ENCODE measurements at regions of chr4 and their contacts with region 1.

Region 1: DNA sequence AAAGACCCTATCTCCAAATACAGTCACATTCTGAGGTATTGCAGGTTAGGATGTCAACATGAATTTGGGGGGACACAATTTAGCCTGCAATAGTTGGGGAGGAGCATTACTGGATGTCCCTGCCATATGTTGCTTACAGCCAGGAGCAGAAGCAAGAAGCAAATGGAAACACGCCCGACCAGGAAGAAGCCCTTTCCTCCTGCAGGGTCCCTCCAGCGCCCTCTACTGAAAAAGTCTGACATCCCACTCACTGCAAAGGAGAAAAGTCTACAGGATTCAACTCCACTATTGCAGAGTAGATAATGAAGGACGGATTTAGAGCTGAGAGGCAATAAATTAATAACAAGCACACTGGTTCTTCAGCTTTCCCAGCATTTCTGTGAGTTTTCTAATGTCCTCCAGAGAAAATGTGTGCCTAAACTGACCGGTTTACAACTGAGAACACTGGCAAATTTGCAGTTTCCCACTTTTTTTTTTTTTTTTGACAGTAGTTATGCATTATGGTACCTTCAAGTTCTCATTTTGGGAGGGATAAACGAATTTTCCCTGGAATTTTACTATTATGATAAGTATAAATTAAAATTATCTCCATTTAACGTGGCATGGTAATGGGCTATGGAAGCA is 31.7 kb downstream of the COQ2 start:
- DNase-seq: peak; percentile 79 to 92
- H3K4me3 ChIP-seq: no peak overlapping the region
- H3K27ac ChIP-seq: no peak overlapping the region
- H3K4me1 ChIP-seq: peaks cover 10 to 26% (median 16%) of the 10 kb centered on the region in 4 donors
- H3K27me3 ChIP-seq: no peaks in the 10 kb centered on the region
- CTCF ChIP-seq: peak in 5 of 7 experiments; percentile 36 to 61 (median 51)
- EP300 ChIP-seq: no peak
- POLR2A ChIP-seq: no peak

Region 2: DNA sequence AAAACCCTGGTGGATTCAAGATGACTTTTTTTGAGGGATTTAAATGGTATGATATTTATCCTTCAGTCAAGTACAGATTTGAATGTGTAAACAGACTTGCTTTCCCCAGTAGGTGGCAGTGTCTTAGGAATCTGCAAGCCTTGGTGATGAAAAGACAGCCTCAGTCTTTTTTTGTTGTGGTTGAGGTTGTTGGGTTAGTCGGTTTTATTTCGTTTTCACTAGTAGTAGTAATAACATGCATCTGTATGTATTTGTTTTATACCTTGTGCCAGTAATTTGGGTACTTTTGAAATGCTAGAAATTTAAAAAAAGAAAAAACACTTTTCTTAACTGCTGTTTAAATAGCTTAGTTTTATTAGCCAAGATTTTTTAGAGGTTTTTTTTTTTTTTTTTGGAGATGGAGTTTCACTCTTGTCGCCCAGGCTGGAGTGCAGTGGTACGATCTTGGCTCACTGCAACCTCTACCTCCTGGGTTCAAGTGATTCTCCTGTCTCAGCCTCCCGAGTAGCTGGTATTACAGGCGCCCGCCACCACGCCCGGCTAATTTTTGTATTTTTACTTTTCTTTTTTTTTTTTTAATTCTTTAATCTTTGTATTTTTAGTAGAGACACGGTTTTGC is 178.7 kb before region 1 on chr4:
- intact Hi-C with region 1: loop called (anchors 10 kb)
- DNase-seq: peak in 1 of 2 donors; percentile 88
- H3K4me3 ChIP-seq: no peak overlapping the region
- H3K27ac ChIP-seq: no peak overlapping the region
- H3K4me1 ChIP-seq: peaks cover 0 to 5% (median 2%) of the 10 kb centered on the region in 4 donors
- H3K27me3 ChIP-seq: no peaks in the 10 kb centered on the region
- CTCF ChIP-seq: peak in 5 of 7 experiments; percentile 50 to 69 (median 63)
- EP300 ChIP-seq: no peak
- POLR2A ChIP-seq: no peak

Measured in stomach (tissue), 19 donors.